Right ventricle myocardium superior (tissue), 1 donor: ENCODE measurements at regions of chr3 and their contacts with region 1.

Region 1: DNA sequence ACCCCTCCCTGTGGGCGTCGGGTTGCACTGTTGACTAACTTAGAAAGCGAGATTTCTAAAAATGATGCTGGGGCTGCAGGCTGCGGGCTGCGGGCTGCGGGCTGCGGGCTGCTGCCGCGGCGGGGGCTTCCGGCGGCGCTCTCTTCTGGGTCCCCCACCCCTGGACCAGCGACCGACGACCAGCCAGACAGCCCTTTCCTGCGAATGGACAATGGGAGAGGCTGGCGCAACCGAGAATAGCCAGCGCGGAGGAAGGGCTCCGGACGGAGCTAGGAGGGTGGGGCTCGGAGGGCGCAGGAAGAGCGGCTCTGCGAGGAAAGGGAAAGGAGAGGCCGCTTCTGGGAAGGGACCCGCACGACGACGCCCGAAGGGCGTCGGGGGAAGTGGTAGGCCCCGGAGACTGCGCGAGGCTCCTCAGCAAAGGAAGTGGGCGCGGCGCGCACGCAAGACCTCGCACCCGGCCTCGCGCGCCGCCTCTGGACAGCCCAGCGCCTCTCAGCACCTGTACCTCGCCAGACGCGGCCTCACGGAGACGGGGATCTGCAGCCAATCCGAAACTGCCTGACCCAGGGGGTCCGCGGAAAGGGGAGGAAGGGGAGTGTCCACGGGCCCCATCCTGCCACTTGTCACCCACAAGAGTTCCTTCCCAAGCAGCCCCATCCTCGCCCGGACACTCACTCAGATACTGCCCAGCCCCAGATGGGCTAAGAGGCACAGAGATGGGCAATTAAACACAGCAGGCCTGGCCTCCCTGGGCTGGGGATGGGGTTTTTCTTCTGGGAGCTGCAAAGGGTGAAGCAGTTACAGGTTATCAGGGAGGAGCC is 70.7 kb downstream of the SLC12A8 start:
- DNase-seq: peak; percentile 89
- ATAC-seq: peak; percentile 83

Region 2: GRCh38 chr3:125062888-125063618 is 78.8 kb before region 1 on chr3:
- intact Hi-C with region 1: loop called (anchors 5 kb)
- DNase-seq: peak; percentile 61
- ATAC-seq: peak; percentile 64